GM10248 (cell line): ENCODE measurements at regions of chr5 and their contacts with region 1.

Region 1: GRCh38 chr5:157574456-157575380 is 857 bp downstream of the ADAM19 start:
- DNase-seq: peak; percentile 45
- CTCF ChIP-seq: no peak

Region 2: DNA sequence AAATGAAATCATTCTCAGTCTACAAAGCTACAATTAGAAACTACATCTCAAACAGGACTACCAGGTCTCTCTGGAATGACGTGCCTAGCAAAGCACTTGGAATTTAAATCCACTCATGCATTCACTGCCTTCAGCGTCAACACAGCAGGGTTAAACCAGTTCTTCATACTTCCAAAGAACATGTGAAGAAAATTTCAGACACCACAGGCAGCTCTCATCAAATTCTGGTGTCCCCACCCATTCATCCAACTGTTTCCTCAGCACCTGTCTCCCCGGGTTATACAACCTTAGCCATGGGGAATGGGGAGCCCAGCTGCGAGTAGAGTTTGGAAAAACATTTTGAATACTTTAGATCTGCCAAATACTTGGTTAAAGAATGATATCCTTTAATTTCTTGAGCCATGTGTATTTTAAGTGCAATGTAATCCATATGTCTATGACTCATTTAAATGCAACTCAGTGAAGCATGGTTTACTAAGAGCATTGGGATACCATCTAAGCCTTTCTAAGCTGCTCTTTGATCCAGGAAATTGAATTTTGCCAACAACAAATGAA is 16.6 kb before region 1 on chr5:
- CTCF ChIA-PET with region 1: interaction called, 14 read pairs
- POLR2A ChIA-PET with region 1: no interaction called
- DNase-seq: no peak
- CTCF ChIP-seq: no peak

Region 3: GRCh38 chr5:157799578-157799977 is 224.9 kb after region 1 on chr5:
- CTCF ChIA-PET with region 1: no interaction called
- POLR2A ChIA-PET with region 1: no interaction called
- DNase-seq: no peak
- CTCF ChIP-seq: no peak

Region 4: GRCh38 chr5:158039911-158040347 is 465.2 kb after region 1 on chr5:
- CTCF ChIA-PET with region 1: no interaction called
- POLR2A ChIA-PET with region 1: no interaction called
- DNase-seq: peak; percentile 18
- CTCF ChIP-seq: no peak